Activated naive CD4-positive, alpha-beta T cell treated with anti-CD3 and anti-CD28 coated beads for 36 hours (primary cell): ENCODE measurements at regions of chr2 and their contacts with region 1.

Region 1: GRCh38 chr2:64831134-64831976 is 157.8 kb upstream of the SLC1A4 start:
- DNase-seq: peak; percentile 94
- H3K4me3 Mint-ChIP-seq: peak overlapping the region; percentile 52
- H3K27ac Mint-ChIP-seq: peak overlapping the region; percentile 81
- H3K4me1 Mint-ChIP-seq: peaks cover 16% of the 10 kb centered on the region
- H3K27me3 Mint-ChIP-seq: peaks cover 5% of the 10 kb centered on the region

Region 2: GRCh38 chr2:64609227-64609941 is 222.0 kb before region 1 on chr2:
- CTCF ChIA-PET with region 1: interaction called, 6 read pairs
- intact Hi-C with region 1: loop called (anchors 2 kb)
- DNase-seq: peak; percentile 62
- H3K4me3 Mint-ChIP-seq: peak overlapping the region; percentile 65
- H3K27ac Mint-ChIP-seq: no peak overlapping the region
- H3K4me1 Mint-ChIP-seq: peaks cover 24% of the 10 kb centered on the region
- H3K27me3 Mint-ChIP-seq: no peaks in the 10 kb centered on the region

Region 3: GRCh38 chr2:64653349-64654062 is 177.8 kb before region 1 on chr2 and contains the start of gene SERTAD2:
- CTCF ChIA-PET with region 1: interaction called, 105 read pairs
- intact Hi-C with region 1: no loop called
- DNase-seq: peak; percentile 85
- H3K4me3 Mint-ChIP-seq: peak within 1 kb of the TSS; percentile 79
- H3K27ac Mint-ChIP-seq: peak within 1 kb of the TSS; percentile 83
- H3K4me1 Mint-ChIP-seq: peaks cover 74% of the 10 kb centered on the region
- H3K27me3 Mint-ChIP-seq: no peaks in the 10 kb centered on the region
- total RNA-seq, gene SERTAD2: 11.4 to 11.6 TPM

Region 4: DNA sequence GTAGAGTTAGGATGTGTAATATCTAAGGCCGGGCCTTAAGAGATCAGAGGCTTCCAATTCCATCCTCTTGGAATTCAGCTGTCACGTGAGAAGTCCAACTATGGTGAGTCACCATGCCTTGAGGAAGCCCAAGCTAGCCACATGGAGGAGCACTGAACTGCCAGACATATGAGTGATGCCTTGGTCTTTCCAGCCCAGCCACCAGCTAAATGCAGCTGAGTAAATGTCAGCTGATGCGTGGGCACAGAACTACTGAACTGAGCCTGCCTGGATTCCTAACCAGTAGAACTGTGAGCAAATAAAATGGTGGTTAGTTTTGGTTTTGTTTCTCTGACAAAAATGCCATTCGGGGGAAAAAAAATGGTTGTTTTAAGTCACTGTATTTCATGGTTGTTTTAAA is 23.9 kb before region 1 on chr2:
- CTCF ChIA-PET with region 1: interaction called, 3 read pairs
- intact Hi-C with region 1: loop called (anchors 1 kb)
- DNase-seq: peak; percentile 78
- H3K4me3 Mint-ChIP-seq: no peak overlapping the region
- H3K27ac Mint-ChIP-seq: no peak overlapping the region
- H3K4me1 Mint-ChIP-seq: peaks cover 25% of the 10 kb centered on the region
- H3K27me3 Mint-ChIP-seq: no peaks in the 10 kb centered on the region

Region 5: GRCh38 chr2:64865073-64865830 is 33.9 kb after region 1 on chr2:
- CTCF ChIA-PET with region 1: interaction called, 6 read pairs
- intact Hi-C with region 1: loop called (anchors 1 kb)
- DNase-seq: peak; percentile 59
- H3K4me3 Mint-ChIP-seq: peak overlapping the region; percentile 55
- H3K27ac Mint-ChIP-seq: no peak overlapping the region
- H3K4me1 Mint-ChIP-seq: no peaks in the 10 kb centered on the region
- H3K27me3 Mint-ChIP-seq: peaks cover 3% of the 10 kb centered on the region